ENCODE measurements at regions of chr7 and their contacts with region 1.

Region 1: GRCh38 chr7:99098824-99099498 is 44.9 kb downstream of the SMURF1 start:
- DNase-seq: no peak
- ATAC-seq: no peak
- H3K4me3 ChIP-seq: no peak overlapping the region
- H3K4me3 Mint-ChIP-seq: no peak overlapping the region
- H3K27ac ChIP-seq: no peak overlapping the region
- H3K27ac Mint-ChIP-seq: no peak overlapping the region
- H3K4me1 ChIP-seq: no peaks in the 10 kb centered on the region
- H3K4me1 Mint-ChIP-seq: peaks cover 36% of the 10 kb centered on the region
- H3K27me3 ChIP-seq: no peaks in the 10 kb centered on the region
- H3K27me3 Mint-ChIP-seq: no peaks in the 10 kb centered on the region
- CTCF ChIP-seq: no peak

Region 2: GRCh38 chr7:99132595-99133321 is 33.8 kb after region 1 on chr7:
- CTCF ChIA-PET with region 1: no interaction called
- POLR2A ChIA-PET with region 1: no interaction called
- intact Hi-C with region 1: loop called in 1 of 2 experiments (anchors 5 kb)
- DNase-seq: no peak
- ATAC-seq: no peak
- H3K4me3 ChIP-seq: no peak overlapping the region
- H3K4me3 Mint-ChIP-seq: no peak overlapping the region
- H3K27ac ChIP-seq: no peak overlapping the region
- H3K27ac Mint-ChIP-seq: no peak overlapping the region
- H3K4me1 ChIP-seq: peaks cover 9% of the 10 kb centered on the region
- H3K4me1 Mint-ChIP-seq: peaks cover 56% of the 10 kb centered on the region
- H3K27me3 ChIP-seq: no peaks in the 10 kb centered on the region
- H3K27me3 Mint-ChIP-seq: no peaks in the 10 kb centered on the region
- CTCF ChIP-seq: no peak